Activated CD8-positive, alpha-beta memory T cell treated with anti-CD3 and anti-CD28 coated beads, Interleukin-2, amount 10 ng/mL, durations not matched to agents 7 days and 5 days (primary cell): ENCODE measurements at regions of chr3 and their contacts with region 1.

Region 1: GRCh38 chr3:151086484-151087456 is 1.3 kb downstream of the MED12L start:
- DNase-seq: peak; percentile 83
- ATAC-seq: peak; percentile 82
- H3K4me3 Mint-ChIP-seq: peak overlapping the region; percentile 81
- H3K27ac Mint-ChIP-seq: peak overlapping the region; percentile 57
- H3K4me1 Mint-ChIP-seq: peaks cover 12% of the 10 kb centered on the region
- H3K27me3 Mint-ChIP-seq: peaks cover 59% of the 10 kb centered on the region

Region 2: GRCh38 chr3:150925751-150926201 is 161.0 kb before region 1 on chr3:
- CTCF ChIA-PET with region 1: interaction called, 10 read pairs
- DNase-seq: peak; percentile 63
- ATAC-seq: peak; percentile 92
- H3K4me3 Mint-ChIP-seq: peak overlapping the region; percentile 56
- H3K27ac Mint-ChIP-seq: no peak overlapping the region
- H3K4me1 Mint-ChIP-seq: peaks cover 6% of the 10 kb centered on the region
- H3K27me3 Mint-ChIP-seq: peaks cover 30% of the 10 kb centered on the region

Region 3: DNA sequence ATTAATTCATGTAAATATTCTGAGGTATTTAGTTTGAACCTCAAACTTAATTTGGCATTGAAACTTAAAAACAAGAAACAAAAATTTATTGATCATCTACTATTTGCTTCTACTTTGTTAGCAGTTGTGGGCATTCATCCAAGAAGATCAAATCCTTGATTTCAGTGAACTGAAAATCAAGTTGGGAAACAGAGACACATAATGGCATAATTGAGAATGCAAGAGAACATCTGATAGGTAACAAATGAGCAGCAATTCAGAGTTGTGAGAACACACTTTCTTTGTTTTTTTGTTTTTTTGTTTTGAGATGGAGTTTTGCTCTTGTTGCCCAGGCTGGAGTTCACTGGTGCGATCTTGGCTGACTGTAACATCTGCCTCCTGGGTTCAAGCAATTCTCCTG is 35.2 kb before region 1 on chr3:
- CTCF ChIA-PET with region 1: no interaction called
- DNase-seq: no peak
- ATAC-seq: no peak
- H3K4me3 Mint-ChIP-seq: no peak overlapping the region
- H3K27ac Mint-ChIP-seq: no peak overlapping the region
- H3K4me1 Mint-ChIP-seq: no peaks in the 10 kb centered on the region
- H3K27me3 Mint-ChIP-seq: peaks cover 35% of the 10 kb centered on the region

Region 4: GRCh38 chr3:151067158-151067557 is 19.6 kb before region 1 on chr3:
- CTCF ChIA-PET with region 1: interaction called, 16 read pairs
- DNase-seq: peak; percentile 46
- ATAC-seq: no peak
- H3K4me3 Mint-ChIP-seq: no peak overlapping the region
- H3K27ac Mint-ChIP-seq: no peak overlapping the region
- H3K4me1 Mint-ChIP-seq: no peaks in the 10 kb centered on the region
- H3K27me3 Mint-ChIP-seq: peaks cover 36% of the 10 kb centered on the region